Esophagus squamous epithelium (tissue), 5 donors: ENCODE measurements at regions of chr11 and their contacts with region 1.

Region 1: GRCh38 chr11:1202776-1203504 is 19.9 kb upstream of the MUC5B start:
- DNase-seq: no peak
- H3K4me3 ChIP-seq: no peak overlapping the region
- H3K27ac ChIP-seq: no peak overlapping the region
- H3K4me1 ChIP-seq: peaks cover 0 to 25% (median 3%) of the 10 kb centered on the region in 3 donors
- H3K27me3 ChIP-seq: peaks cover 0 to 95% (median 5%) of the 10 kb centered on the region in 4 donors
- CTCF ChIP-seq: peak; percentile 83 to 93 (median 89)
- POLR2A ChIP-seq: no peak

Region 2: DNA sequence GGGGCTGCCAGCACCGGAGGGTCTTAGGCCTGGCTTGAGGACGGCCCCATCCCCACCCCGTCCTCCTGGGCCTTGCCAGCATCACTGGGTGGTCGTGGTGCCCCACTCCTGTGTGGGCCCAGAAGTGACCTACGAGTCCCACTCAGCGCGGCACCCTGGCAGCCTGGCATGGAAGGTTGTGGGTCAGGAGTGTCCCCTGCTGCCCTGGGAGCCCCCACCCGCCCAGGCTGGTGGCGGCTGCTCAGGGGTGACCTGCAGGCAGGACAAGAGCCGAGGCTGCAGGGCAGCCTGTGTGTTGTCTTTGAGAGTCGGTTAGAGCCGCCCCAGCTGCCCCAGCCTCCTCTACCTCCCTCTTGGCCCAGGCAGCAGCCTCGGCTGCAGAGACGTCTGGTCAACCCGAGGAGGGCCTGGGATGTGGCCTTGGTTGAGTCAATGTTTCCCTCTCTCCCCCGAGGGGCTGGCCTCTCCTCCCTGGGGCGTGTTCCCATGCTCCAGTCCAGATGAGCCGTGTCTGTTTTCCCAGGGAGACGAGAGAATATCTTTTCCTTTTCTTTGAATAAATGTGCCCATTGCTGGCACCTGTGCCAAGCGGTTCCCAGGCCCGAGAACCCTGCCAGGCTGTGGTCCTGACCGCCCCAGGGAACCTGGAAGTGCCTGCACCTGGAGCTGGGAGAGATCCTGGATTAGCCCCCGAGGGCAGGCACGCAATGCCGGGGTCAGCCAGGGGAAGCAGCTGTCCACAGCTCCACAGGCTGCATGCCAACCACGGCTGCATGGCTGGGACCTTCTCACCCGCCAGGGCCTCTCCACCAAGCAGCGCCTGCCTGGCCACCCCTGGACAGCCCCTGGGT is 80.9 kb before region 1 on chr11:
- intact Hi-C with region 1: no loop called
- DNase-seq: no peak
- H3K4me3 ChIP-seq: no peak overlapping the region
- H3K27ac ChIP-seq: no peak overlapping the region
- H3K4me1 ChIP-seq: no peaks in the 10 kb centered on the region
- H3K27me3 ChIP-seq: peaks cover 0 to 76% (median 0%) of the 10 kb centered on the region in 4 donors
- CTCF ChIP-seq: no peak
- POLR2A ChIP-seq: no peak

Region 3: GRCh38 chr11:1515082-1516060 is 312.4 kb after region 1 on chr11:
- intact Hi-C with region 1: loop called (anchors 10 kb)
- DNase-seq: no peak
- H3K4me3 ChIP-seq: peak overlapping the region in 1 of 4 donors; percentile 37
- H3K27ac ChIP-seq: no peak overlapping the region
- H3K4me1 ChIP-seq: peaks cover 20 to 84% (median 34%) of the 10 kb centered on the region in 3 donors
- H3K27me3 ChIP-seq: no peaks in the 10 kb centered on the region
- CTCF ChIP-seq: peak; percentile 86 to 95 (median 90)
- POLR2A ChIP-seq: no peak

Region 4: GRCh38 chr11:1572197-1573076 is 369.5 kb after region 1 on chr11 and contains the start of gene DUSP8:
- intact Hi-C with region 1: loop called (anchors 10 kb)
- DNase-seq: no peak
- H3K4me3 ChIP-seq: peak within 1 kb of the TSS; percentile 42 to 71 (median 52)
- H3K27ac ChIP-seq: peak within 1 kb of the TSS; percentile 68 to 80 (median 74)
- H3K4me1 ChIP-seq: peaks cover 22 to 52% (median 28%) of the 10 kb centered on the region in 3 donors
- H3K27me3 ChIP-seq: peaks cover 0 to 64% (median 7%) of the 10 kb centered on the region in 4 donors
- CTCF ChIP-seq: peak in 1 of 6 experiments; percentile 2
- POLR2A ChIP-seq: peak in 1 of 4 donors; percentile 36
- total RNA-seq, gene DUSP8: 0.12 to 1.3 (median 0.64) TPM